Endothelial cell of umbilical vein (primary cell): ENCODE measurements at regions of chr14 and their contacts with region 1.

Region 1: GRCh38 chr14:75487155-75487671 is 35.1 kb upstream of the BATF start:
- DNase-seq: no peak
- H3K4me3 ChIP-seq: no peak overlapping the region
- H3K27ac ChIP-seq: no peak overlapping the region
- H3K4me1 ChIP-seq: no peaks in the 10 kb centered on the region
- H3K27me3 ChIP-seq: peaks cover 9 to 10% of the 10 kb centered on the region in 2 experiments
- CTCF ChIP-seq: no peak
- POLR2A ChIP-seq: no peak

Region 2: DNA sequence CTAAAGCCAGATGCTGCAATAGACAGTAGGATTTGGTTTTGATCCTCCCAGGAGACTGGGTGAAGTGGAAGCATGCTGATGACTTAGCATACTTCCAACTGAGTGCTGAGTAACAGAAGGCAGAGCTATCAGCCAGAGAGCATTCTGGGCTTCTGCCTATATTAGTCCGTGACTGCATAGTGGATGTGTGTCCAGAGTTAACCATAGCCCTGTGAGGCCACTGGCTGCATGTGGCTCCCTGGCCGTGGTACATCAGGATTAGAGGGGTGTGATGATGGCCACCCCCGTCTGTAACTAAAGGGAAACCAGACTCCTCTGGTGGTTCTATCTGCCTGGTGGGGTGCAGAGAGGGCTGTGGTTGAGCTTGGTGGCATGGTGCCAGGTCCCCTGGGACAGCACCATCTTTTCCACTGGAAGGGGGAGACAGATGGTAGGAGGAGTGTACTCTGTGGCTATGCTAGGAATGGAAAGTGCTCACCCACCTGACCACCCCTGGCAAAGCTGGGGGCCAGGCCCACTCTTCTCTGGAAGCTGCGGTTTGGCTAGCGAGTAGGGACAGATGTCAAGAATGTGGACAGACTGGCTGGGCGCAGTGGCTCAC is 1211.9 kb before region 1 on chr14:
- CTCF ChIA-PET with region 1: no interaction called
- POLR2A ChIA-PET with region 1: no interaction called
- dilution Hi-C with region 1: no loop called
- intact Hi-C with region 1: no loop called
- DNase-seq: no peak
- H3K4me3 ChIP-seq: no peak overlapping the region
- H3K27ac ChIP-seq: no peak overlapping the region
- H3K4me1 ChIP-seq: peaks cover 4% of the 10 kb centered on the region
- H3K27me3 ChIP-seq: peaks cover 0 to 2% of the 10 kb centered on the region in 2 experiments
- CTCF ChIP-seq: no peak
- POLR2A ChIP-seq: no peak

Region 3: GRCh38 chr14:74401504-74402241 is 1085.5 kb before region 1 on chr14:
- CTCF ChIA-PET with region 1: no interaction called
- POLR2A ChIA-PET with region 1: no interaction called
- dilution Hi-C with region 1: no loop called
- intact Hi-C with region 1: no loop called
- DNase-seq: no peak
- H3K4me3 ChIP-seq: no peak overlapping the region
- H3K27ac ChIP-seq: no peak overlapping the region
- H3K4me1 ChIP-seq: peaks cover 5% of the 10 kb centered on the region
- H3K27me3 ChIP-seq: peaks cover 3 to 8% of the 10 kb centered on the region in 2 experiments
- CTCF ChIP-seq: no peak
- POLR2A ChIP-seq: no peak

Region 4: GRCh38 chr14:74905375-74906142 is 581.7 kb before region 1 on chr14:
- CTCF ChIA-PET with region 1: no interaction called
- POLR2A ChIA-PET with region 1: no interaction called
- dilution Hi-C with region 1: no loop called
- intact Hi-C with region 1: no loop called
- DNase-seq: peak; percentile 52
- H3K4me3 ChIP-seq: no peak overlapping the region
- H3K27ac ChIP-seq: no peak overlapping the region
- H3K4me1 ChIP-seq: peaks cover 5% of the 10 kb centered on the region
- H3K27me3 ChIP-seq: no peaks in the 10 kb centered on the region
- CTCF ChIP-seq: peak; percentile 94 to 95
- POLR2A ChIP-seq: no peak

Region 5: DNA sequence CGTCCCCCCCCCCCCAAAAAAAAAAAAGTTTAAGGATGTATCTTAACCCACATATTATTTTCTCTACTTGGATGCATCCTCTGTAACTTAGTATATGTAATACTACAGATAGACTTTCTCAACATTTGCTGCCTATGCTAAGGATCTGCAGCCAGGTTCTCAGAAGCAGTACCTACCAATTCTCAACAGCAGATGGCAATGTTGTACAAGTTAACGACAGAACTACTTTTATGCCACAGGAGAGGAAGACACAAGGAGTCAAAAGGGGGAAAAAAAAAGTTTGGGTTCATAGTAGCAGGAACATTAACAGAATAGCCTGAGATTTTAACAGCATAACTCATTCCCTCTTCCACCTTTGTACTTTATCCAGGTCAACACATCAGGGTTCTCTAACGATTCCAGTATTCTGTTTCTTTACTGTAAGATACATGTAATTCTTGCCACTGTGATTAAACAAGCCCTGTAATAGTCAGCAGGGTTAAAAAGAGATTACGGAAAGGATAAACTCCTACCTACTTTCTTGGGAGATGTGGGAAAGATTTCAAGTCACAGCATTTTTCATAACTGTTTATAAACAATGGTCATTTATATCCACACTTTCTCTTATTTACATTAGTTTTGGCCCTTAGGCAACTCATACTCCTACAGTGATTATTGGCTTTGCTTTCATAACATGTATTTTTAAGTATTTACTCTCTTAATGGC is 354.7 kb before region 1 on chr14:
- CTCF ChIA-PET with region 1: interaction called, 4 read pairs
- POLR2A ChIA-PET with region 1: no interaction called
- dilution Hi-C with region 1: no loop called
- intact Hi-C with region 1: loop called (anchors 2 kb)
- DNase-seq: peak; percentile 81
- H3K4me3 ChIP-seq: no peak overlapping the region
- H3K27ac ChIP-seq: no peak overlapping the region
- H3K4me1 ChIP-seq: peaks cover 10% of the 10 kb centered on the region
- H3K27me3 ChIP-seq: no peaks in the 10 kb centered on the region
- CTCF ChIP-seq: peak; percentile 38 to 55
- POLR2A ChIP-seq: no peak

Region 6: GRCh38 chr14:75323571-75323970 is 163.6 kb before region 1 on chr14:
- CTCF ChIA-PET with region 1: interaction called, 21 read pairs
- POLR2A ChIA-PET with region 1: no interaction called
- dilution Hi-C with region 1: no loop called
- intact Hi-C with region 1: no loop called
- DNase-seq: no peak
- H3K4me3 ChIP-seq: no peak overlapping the region
- H3K27ac ChIP-seq: no peak overlapping the region
- H3K4me1 ChIP-seq: no peaks in the 10 kb centered on the region
- H3K27me3 ChIP-seq: peaks cover 17 to 21% of the 10 kb centered on the region in 2 experiments
- CTCF ChIP-seq: no peak
- POLR2A ChIP-seq: no peak

Region 7: DNA sequence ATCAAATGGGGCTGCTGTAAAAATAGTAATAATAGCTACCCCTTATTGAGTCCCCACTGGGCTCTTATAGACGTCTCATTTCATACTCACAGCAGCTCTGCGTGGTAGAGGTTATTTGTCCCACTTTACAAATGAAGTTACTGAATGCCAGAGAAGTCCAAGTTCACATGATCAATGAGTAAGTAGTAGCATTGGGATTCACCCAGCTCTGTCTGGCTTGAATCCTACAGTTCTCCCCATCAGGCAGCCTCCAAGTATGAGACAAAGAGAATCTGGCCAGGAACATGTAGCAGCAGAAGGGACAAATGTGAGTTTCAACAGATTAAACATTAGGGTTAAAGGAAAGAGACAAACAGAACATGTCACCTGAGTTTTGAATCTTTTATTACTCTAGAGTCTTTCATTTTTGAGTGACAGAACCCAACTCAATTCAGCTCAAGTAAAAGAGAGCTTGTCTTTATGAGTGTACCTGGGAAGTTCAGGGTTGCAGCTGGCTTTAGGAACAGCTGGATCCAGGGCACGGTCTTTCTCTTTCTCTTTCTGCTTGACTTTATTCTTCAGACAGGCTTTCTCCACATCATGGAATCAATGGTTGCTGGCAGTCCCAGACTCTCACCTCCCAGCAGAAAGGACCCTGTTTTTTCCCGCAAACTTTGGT is 123.5 kb before region 1 on chr14:
- CTCF ChIA-PET with region 1: no interaction called
- POLR2A ChIA-PET with region 1: no interaction called
- dilution Hi-C with region 1: no loop called
- intact Hi-C with region 1: no loop called
- DNase-seq: no peak
- H3K4me3 ChIP-seq: no peak overlapping the region
- H3K27ac ChIP-seq: no peak overlapping the region
- H3K4me1 ChIP-seq: no peaks in the 10 kb centered on the region
- H3K27me3 ChIP-seq: peaks cover 18 to 24% of the 10 kb centered on the region in 2 experiments
- CTCF ChIP-seq: no peak
- POLR2A ChIP-seq: no peak

Region 8: DNA sequence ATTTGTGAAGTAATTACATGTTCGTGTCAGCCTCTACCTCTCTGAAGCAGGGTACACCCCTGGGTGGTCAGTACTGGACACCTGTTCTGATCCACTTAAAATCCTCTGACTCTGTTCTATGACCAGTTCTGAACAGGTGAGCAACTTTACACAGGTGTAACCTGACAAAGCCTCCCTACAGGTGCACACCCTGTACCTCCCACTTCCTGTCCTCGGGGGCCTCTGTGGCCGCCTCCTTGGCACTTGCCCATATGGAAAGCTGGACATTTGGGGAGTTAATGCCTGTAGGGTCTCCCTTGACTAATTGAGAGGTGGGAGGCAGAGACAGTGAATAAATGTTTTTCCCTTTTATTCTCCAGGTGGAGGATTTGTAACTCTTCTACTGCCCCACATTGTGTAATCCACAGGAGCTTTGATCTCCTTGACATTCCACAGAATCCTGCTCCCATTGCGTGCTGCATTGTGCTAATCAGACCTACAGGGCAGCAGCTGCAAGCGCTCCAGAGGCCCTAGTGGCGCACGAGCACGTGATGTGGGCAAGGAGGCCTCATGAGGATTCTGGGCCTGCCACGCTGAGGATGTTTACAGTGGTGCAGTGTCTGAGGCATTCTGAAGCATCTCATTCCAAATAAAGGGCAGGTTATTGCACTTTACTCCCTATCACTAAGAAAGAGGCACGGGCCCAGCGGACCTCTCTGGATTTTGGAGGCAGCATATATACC is 10.8 kb before region 1 on chr14:
- CTCF ChIA-PET with region 1: interaction called, 15 read pairs
- POLR2A ChIA-PET with region 1: no interaction called
- dilution Hi-C with region 1: no loop called
- intact Hi-C with region 1: no loop called
- DNase-seq: no peak
- H3K4me3 ChIP-seq: no peak overlapping the region
- H3K27ac ChIP-seq: no peak overlapping the region
- H3K4me1 ChIP-seq: no peaks in the 10 kb centered on the region
- H3K27me3 ChIP-seq: peaks cover 4 to 5% of the 10 kb centered on the region in 2 experiments
- CTCF ChIP-seq: no peak
- POLR2A ChIP-seq: no peak

Region 9: GRCh38 chr14:75514673-75515628 is 27.7 kb after region 1 on chr14:
- CTCF ChIA-PET with region 1: interaction called, 23 read pairs
- POLR2A ChIA-PET with region 1: interaction called, 3 read pairs
- dilution Hi-C with region 1: no loop called
- intact Hi-C with region 1: no loop called
- DNase-seq: peak; percentile 17
- H3K4me3 ChIP-seq: peak overlapping the region in 2 of 3 experiments; percentile 28 to 29
- H3K27ac ChIP-seq: no peak overlapping the region
- H3K4me1 ChIP-seq: no peaks in the 10 kb centered on the region
- H3K27me3 ChIP-seq: no peaks in the 10 kb centered on the region
- CTCF ChIP-seq: peak in 1 of 2 donors; percentile 19
- POLR2A ChIP-seq: no peak